Psoas muscle (tissue), 8 donors: ENCODE measurements at regions of chr4 and their contacts with region 1.

Region 1: GRCh38 chr4:87038837-87039615 is 104.2 kb downstream of the AFF1 start:
- DNase-seq: peak; percentile 80 to 90
- ATAC-seq: peak; percentile 87 to 98 (median 90)
- H3K4me3 ChIP-seq: no peak overlapping the region
- H3K27ac ChIP-seq: peak overlapping the region; percentile 91
- H3K4me1 ChIP-seq: peaks cover 99% of the 10 kb centered on the region
- H3K27me3 ChIP-seq: no peaks in the 10 kb centered on the region
- CTCF ChIP-seq: no peak

Region 2: DNA sequence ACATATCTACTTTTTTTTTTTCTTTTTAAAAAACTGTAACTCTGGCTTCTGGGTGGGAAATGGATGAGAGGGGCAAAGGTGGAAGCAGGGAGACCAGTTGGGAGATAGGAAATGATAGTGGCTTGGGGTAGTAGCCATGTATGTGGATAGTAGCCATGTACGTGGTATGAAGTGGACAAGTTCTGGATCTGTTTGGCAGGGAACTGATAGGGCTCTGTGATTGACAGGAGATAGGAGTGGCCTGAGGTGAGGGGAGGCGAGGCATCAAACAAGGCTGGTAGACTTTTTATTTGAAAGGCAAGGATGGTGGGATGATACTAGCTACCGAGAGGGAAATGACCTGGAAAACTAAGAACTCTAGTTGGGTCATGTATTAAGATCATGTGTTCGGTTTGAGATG is 13.6 kb after region 1 on chr4:
- intact Hi-C with region 1: loop called in 1 of 2 experiments (anchors 1 kb)
- DNase-seq: no peak
- ATAC-seq: peak in 1 of 4 donors; percentile 25
- H3K4me3 ChIP-seq: no peak overlapping the region
- H3K27ac ChIP-seq: peak overlapping the region; percentile 87
- H3K4me1 ChIP-seq: peaks cover 72% of the 10 kb centered on the region
- H3K27me3 ChIP-seq: no peaks in the 10 kb centered on the region
- CTCF ChIP-seq: no peak

Region 3: DNA sequence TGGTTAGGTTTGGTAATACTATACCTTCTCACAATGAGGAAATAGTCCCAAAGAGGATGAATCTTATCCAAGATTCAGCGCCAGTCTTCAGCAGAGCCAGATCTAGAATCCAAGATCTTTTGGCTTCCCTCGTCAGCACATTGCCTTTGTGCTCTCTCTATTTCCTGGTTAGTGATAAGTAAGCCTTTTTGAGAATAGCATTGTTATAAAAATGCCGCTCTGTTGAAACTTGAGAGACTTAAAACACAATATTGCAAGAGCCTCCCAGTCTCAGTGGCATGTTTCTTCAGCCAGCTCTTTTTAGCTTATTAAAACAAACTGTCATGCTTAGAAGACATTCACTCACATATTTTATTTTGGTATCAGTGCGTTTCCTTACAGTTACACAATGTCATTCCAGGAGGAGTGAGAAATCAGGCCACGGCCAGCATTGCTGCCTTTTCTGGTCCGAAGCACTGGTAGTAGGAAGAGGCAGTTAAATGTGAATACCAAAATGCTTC is 40.0 kb after region 1 on chr4:
- intact Hi-C with region 1: loop called in 1 of 2 experiments (anchors 5 kb)
- DNase-seq: peak in 1 of 2 donors; percentile 82
- ATAC-seq: peak; percentile 81 to 92 (median 85)
- H3K4me3 ChIP-seq: peak overlapping the region; percentile 18
- H3K27ac ChIP-seq: peak overlapping the region; percentile 90
- H3K4me1 ChIP-seq: peaks cover 89% of the 10 kb centered on the region
- H3K27me3 ChIP-seq: no peaks in the 10 kb centered on the region
- CTCF ChIP-seq: no peak

Region 4: DNA sequence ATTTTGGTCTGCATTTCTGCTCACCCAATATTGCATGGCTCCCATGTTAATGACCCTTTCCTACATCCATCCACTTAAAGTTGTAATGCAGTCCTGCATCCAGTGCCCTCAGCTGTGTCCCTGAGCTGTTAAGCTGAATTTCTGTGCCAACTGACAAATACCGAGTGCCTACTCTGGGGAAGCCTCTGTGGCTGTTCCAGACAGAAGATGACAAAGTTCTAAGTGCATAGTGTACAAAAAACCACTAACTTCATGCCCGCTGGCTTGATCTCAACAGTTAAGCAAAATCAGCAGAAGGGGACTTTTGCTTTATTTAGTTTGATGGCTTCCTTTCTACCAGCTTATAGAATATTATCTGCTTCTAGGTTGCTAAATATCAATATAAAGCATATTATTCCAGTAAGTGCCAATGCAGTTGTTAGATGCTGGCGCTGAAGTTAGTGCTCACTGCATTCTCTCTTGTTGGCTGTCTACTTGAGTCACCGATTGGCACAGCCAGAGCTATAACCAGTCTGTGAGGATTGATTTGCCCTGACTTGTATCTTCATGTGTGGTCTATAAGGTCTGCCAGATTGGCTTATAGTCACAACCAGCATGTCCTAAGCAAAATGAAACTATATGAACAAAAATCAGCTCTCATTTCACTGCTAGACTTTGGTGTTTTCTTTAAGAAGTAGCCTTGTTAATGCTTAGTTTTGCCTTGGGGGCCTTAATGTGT is 82.5 kb after region 1 on chr4:
- intact Hi-C with region 1: no loop called
- DNase-seq: no peak
- ATAC-seq: peak; percentile 70 to 80 (median 74)
- H3K4me3 ChIP-seq: peak overlapping the region; percentile 60
- H3K27ac ChIP-seq: peak overlapping the region; percentile 87
- H3K4me1 ChIP-seq: peaks cover 69% of the 10 kb centered on the region
- H3K27me3 ChIP-seq: no peaks in the 10 kb centered on the region
- CTCF ChIP-seq: no peak